Activated CD8-positive, alpha-beta T cell treated with anti-CD3 and anti-CD28 coated beads for 36 hours (primary cell): ENCODE measurements at regions of chr3 and their contacts with region 1.

Region 1: GRCh38 chr3:163056874-163057497 is 1560.4 kb downstream of the OTOL1 start:
- DNase-seq: peak; percentile 61
- ATAC-seq: no peak
- H3K4me3 Mint-ChIP-seq: no peak overlapping the region
- H3K27ac Mint-ChIP-seq: no peak overlapping the region
- H3K4me1 Mint-ChIP-seq: no peaks in the 10 kb centered on the region
- H3K27me3 Mint-ChIP-seq: no peaks in the 10 kb centered on the region
- CTCF ChIP-seq: peak; percentile 56

Region 2: GRCh38 chr3:163071697-163072096 is 14.7 kb after region 1 on chr3:
- CTCF ChIA-PET with region 1: interaction called, 11 read pairs
- POLR2A ChIA-PET with region 1: no interaction called
- intact Hi-C with region 1: no loop called
- DNase-seq: no peak
- ATAC-seq: no peak
- H3K4me3 Mint-ChIP-seq: no peak overlapping the region
- H3K27ac Mint-ChIP-seq: no peak overlapping the region
- H3K4me1 Mint-ChIP-seq: no peaks in the 10 kb centered on the region
- H3K27me3 Mint-ChIP-seq: no peaks in the 10 kb centered on the region
- CTCF ChIP-seq: no peak